ENCODE measurements at regions of chr11 and their contacts with region 1.

Region 1: DNA sequence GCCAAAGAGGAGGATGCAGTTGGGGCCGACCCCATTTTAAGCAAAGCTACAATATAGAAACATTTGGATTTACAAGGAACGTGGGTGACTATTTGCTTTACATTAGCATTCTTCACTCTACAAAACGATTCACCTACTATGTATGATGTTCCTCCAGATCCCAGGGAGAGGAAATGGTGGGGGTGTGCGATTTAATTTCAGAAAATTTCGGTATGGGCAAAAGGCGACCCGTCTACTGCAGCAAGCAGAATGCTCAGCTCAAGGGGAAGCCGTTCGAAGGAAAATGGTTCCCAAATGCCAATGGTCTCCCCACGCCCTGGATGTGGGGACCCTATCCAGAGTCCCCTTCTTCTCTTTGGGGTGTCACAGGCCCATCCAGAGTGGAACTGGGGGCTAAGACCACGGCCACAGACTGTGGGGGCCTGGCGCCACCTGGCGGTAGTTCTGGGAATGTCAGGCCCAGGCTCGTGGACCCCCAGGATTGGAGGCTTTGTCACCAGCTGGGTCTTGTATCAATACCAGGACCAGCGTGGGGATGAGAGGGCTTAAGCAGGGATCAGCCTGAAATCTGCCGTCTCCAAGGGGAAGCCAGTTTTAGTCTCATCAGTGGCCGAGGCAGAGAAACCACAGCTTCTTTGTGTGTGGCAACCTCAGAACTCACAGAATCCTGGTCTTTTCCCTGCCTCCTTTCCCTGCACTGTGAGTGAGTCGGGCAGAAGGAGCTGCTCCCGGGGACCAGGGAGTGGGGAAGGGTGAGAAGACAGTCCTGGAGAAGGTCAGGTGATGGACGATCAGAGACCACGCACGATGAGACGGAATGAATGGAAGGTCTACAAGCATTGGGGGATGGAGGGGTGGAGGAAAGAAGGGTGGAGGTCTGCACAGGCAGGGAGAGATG is 8.4 kb downstream of the LRRC10B start:
- DNase-seq: peak; percentile 41 to 68 (median 50)
- H3K4me3 ChIP-seq: peak overlapping the region; percentile 61
- H3K4me3 Mint-ChIP-seq: peak overlapping the region in 6 of 7 donors; percentile 47 to 72 (median 63)
- H3K27ac ChIP-seq: no peak overlapping the region
- H3K27ac Mint-ChIP-seq: peak overlapping the region in 2 of 8 donors; percentile 57 to 68
- H3K4me1 ChIP-seq: peaks cover 9% of the 10 kb centered on the region
- H3K4me1 Mint-ChIP-seq: peaks cover 6 to 12% (median 7%) of the 10 kb centered on the region in 3 donors
- H3K27me3 ChIP-seq: peaks cover 11% of the 10 kb centered on the region
- H3K27me3 Mint-ChIP-seq: peaks cover 14 to 32% of the 10 kb centered on the region in 2 donors

Region 2: DNA sequence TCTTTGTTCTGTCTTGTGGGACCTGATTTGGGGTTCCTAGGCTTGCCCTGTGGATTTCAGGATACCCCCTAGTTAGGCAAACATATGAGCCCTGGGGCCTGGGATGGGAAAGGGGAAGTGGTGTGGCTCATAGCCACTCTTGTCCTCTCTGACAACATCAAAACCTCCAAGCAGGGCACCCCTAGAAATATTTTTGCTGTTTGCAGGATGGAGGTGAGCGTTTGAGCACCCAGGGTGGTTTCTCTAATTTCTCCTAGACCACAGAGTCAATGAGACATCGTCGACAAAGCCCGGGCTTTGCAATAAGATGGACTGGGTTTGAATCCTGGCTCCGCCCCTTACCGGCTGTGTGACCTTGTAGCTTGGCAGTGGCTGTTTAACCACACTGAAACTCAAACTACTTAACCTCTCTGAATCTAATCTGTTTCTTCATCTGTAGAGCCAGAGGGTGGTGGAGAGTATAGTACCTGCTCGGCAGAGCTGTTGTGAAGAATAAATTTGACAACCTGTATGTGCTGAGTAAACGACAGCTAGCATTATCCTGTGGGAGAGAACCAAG is 13.6 kb before region 1 on chr11:
- CTCF ChIA-PET with region 1: interaction called, 19 read pairs
- POLR2A ChIA-PET with region 1: no interaction called
- DNase-seq: no peak
- H3K4me3 ChIP-seq: no peak overlapping the region
- H3K4me3 Mint-ChIP-seq: no peak overlapping the region
- H3K27ac ChIP-seq: no peak overlapping the region
- H3K27ac Mint-ChIP-seq: no peak overlapping the region
- H3K4me1 ChIP-seq: no peaks in the 10 kb centered on the region
- H3K4me1 Mint-ChIP-seq: peaks cover 4 to 7% (median 6%) of the 10 kb centered on the region in 3 donors
- H3K27me3 ChIP-seq: peaks cover 23% of the 10 kb centered on the region
- H3K27me3 Mint-ChIP-seq: peaks cover 28 to 30% of the 10 kb centered on the region in 2 donors

Region 3: DNA sequence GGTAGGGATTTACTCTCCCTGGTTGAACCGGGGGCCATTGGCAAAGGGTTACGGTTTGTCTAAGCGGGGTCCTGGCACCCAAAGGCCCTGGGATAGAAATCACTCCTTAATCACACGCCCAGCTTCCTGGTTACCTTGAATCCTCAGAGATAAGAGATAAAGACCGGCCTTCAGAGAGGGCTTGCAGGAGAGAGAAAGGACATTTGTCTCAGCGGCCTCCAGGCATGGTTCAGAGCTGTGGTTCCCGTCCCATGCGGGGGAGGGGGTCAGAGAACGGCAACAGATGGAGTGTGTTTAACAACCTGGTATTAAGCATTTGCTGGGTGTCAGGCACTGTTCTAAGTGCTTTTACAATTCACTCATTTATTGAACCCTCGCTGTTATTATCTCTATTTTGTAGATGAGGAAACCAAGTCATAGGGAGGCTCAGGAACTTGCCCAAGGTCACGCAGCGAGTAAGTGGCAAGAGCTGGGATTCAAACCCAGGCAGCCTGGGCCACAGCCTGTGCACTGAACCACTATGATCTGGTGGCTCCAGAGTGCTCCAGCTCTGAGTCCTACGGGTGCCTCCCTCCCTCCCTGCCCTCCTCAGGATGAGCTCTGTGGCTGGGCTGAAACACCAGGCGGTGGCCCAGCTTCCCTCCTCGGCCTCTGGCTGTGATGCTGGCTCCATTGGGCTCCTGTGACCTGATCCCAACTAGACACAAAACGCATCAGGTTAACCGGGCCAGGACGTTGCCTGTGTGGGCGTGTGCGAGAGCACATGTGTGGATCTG is 10.2 kb after region 1 on chr11:
- CTCF ChIA-PET with region 1: interaction called, 16 read pairs
- POLR2A ChIA-PET with region 1: no interaction called
- DNase-seq: no peak
- H3K4me3 ChIP-seq: no peak overlapping the region
- H3K4me3 Mint-ChIP-seq: no peak overlapping the region
- H3K27ac ChIP-seq: no peak overlapping the region
- H3K27ac Mint-ChIP-seq: no peak overlapping the region
- H3K4me1 ChIP-seq: no peaks in the 10 kb centered on the region
- H3K4me1 Mint-ChIP-seq: no peaks in the 10 kb centered on the region
- H3K27me3 ChIP-seq: no peaks in the 10 kb centered on the region
- H3K27me3 Mint-ChIP-seq: peaks cover 8 to 50% of the 10 kb centered on the region in 2 donors

Region 4: GRCh38 chr11:61532139-61533038 is 15.5 kb after region 1 on chr11:
- CTCF ChIA-PET with region 1: interaction called, 14 read pairs
- POLR2A ChIA-PET with region 1: no interaction called
- DNase-seq: peak in 3 of 5 donors; percentile 10 to 26 (median 13)
- H3K4me3 ChIP-seq: no peak overlapping the region
- H3K4me3 Mint-ChIP-seq: no peak overlapping the region
- H3K27ac ChIP-seq: no peak overlapping the region
- H3K27ac Mint-ChIP-seq: peak overlapping the region in 1 of 8 donors; percentile 57
- H3K4me1 ChIP-seq: no peaks in the 10 kb centered on the region
- H3K4me1 Mint-ChIP-seq: no peaks in the 10 kb centered on the region
- H3K27me3 ChIP-seq: no peaks in the 10 kb centered on the region
- H3K27me3 Mint-ChIP-seq: peaks cover 9 to 38% of the 10 kb centered on the region in 2 donors

Region 5: DNA sequence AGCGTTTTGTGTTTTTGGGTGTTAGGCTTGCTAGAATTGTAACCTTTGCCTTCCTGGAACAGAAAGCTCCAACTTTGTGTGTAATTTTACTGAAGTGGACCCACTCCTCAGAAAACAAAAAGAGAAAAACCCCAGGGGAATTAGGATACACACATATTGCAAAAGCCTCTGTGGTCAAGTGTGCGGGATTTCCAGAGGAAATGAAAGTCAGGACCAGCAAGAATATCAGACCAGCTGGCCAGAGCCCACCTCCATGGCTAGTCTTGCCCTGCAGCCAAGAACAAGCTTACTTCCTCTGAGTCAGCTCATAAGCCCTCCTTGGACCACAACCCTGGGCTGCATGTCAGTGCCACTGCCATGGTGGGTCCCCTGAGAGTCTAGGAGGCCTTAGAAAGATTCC is 487.5 kb after region 1 on chr11:
- CTCF ChIA-PET with region 1: no interaction called
- POLR2A ChIA-PET with region 1: no interaction called
- DNase-seq: no peak
- H3K4me3 ChIP-seq: no peak overlapping the region
- H3K4me3 Mint-ChIP-seq: no peak overlapping the region
- H3K27ac ChIP-seq: no peak overlapping the region
- H3K27ac Mint-ChIP-seq: peak overlapping the region in 1 of 8 donors; percentile 61
- H3K4me1 ChIP-seq: no peaks in the 10 kb centered on the region
- H3K4me1 Mint-ChIP-seq: no peaks in the 10 kb centered on the region
- H3K27me3 ChIP-seq: no peaks in the 10 kb centered on the region
- H3K27me3 Mint-ChIP-seq: peaks cover 5 to 12% of the 10 kb centered on the region in 2 donors

Region 6: GRCh38 chr11:62747475-62748160 is 1230.7 kb after region 1 on chr11:
- CTCF ChIA-PET with region 1: no interaction called
- POLR2A ChIA-PET with region 1: no interaction called
- DNase-seq: no peak
- H3K4me3 ChIP-seq: no peak overlapping the region
- H3K4me3 Mint-ChIP-seq: no peak overlapping the region
- H3K27ac ChIP-seq: no peak overlapping the region
- H3K27ac Mint-ChIP-seq: peak overlapping the region in 2 of 8 donors; percentile 3 to 15
- H3K4me1 ChIP-seq: peaks cover 7% of the 10 kb centered on the region
- H3K4me1 Mint-ChIP-seq: peaks cover 9 to 28% (median 13%) of the 10 kb centered on the region in 3 donors
- H3K27me3 ChIP-seq: no peaks in the 10 kb centered on the region
- H3K27me3 Mint-ChIP-seq: no peaks in the 10 kb centered on the region

Measured in CD8-positive, alpha-beta memory T cell (primary cell).